Mammary epithelial cell (primary cell): ENCODE measurements at regions of chr6 and their contacts with region 1.

Region 1: DNA sequence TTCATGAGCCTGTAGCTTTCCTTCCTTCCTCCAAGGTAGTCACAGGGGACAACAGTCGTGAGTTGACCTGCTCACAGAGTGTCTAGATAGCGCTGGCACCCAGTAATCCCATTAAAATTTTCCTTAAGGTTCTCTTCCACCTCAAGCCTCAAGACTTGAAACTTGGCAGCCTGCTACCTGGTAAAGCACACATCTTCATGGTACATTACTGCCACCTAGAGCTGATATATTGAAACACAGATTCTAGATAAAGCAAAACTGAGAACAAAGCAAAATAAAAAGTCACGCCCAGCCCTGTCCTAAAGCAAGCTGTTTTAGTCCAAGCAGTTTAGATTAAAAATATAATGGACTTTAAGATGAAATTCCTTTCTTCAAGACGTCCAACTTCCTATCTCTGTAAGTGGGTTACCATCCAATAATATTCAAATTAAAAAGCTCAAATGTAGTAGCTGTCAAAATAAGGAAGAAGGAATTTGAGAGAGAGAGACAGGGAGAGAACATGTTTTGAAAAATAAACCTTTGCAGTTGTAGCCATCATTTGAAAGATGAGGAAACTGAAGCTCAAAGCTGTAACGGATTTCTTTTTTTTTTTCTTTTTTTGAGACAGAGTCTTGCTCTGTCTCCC is 50.7 kb upstream of the CD83 start:
- DNase-seq: peak; percentile 68
- H3K4me3 ChIP-seq: no peak overlapping the region
- H3K27ac ChIP-seq: no peak overlapping the region
- H3K4me1 ChIP-seq: peaks cover 15% of the 10 kb centered on the region
- H3K27me3 ChIP-seq: no peaks in the 10 kb centered on the region
- CTCF ChIP-seq: peak; percentile 48 to 62

Region 2: DNA sequence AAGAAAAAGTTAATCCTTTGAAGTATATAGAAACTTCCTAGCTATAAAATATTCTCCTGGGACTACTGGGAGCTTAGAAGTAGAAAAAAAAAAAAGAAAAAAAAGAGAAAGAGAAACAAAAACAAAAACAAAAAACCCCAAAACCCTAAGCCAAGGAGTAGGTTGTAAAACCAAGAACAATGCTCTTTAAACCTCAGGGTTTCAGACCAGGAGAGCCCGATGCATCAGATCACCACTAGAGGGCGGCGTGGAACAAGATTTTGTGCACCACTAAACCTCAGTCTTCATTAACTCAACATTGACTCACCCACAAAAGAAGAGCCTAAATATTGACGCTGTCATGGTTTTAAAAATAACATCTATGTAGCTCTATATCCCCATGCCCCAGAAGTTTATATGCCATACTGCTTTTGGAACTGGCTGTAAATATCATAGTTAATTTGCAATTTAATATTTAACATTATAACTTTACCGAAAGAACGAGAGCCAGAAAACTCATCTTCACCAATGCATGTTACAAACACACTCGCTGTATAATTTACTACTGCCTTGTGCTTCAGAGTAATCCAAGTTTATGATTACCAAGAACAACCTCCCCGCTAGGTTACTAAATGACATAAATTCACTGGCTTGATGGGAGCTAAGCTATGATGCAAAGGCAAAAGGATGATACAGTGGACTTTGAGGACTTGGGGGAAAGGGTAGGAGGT is 271.7 kb before region 1 on chr6:
- CTCF ChIA-PET with region 1: interaction called, 6 read pairs
- dilution Hi-C with region 1: no loop called
- in situ Hi-C with region 1: no loop called
- intact Hi-C with region 1: loop called (anchors 1 kb)
- DNase-seq: peak; percentile 73
- H3K4me3 ChIP-seq: no peak overlapping the region
- H3K27ac ChIP-seq: peak overlapping the region; percentile 53
- H3K4me1 ChIP-seq: peaks cover 5% of the 10 kb centered on the region
- H3K27me3 ChIP-seq: no peaks in the 10 kb centered on the region
- CTCF ChIP-seq: peak; percentile 94 to 97

Region 3: DNA sequence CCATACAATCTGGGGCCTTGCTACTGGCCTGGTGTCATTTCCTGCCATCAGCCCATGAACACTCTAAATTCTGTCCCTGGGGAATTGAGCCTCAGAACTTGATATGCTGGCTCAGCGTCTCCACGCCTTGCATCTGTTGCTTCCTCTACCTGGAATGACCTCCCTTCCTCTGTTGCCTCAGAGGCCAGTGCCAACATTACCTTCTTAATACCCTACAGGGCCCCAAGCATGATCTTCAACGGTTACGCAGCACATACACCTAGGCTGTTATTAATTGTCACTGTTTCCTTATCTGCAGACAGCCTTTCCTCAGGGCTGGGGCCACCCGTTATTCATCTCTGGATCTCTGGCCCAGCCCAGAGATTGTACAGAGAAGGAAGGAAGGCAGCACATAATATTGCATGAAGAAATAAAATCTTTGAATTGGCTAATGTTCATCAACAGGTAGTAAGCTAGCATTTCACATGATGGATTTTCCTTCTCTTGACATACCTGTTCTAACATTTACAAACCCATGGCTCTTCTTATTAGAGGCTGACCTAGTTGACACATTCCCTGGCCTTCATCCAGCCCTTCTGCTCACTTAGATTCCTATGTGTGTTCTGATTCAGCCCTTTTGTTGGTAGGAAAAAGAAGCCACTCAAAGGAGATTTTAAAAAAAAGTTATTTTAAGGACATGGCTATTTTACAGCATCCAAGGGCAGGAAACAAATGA is 150.5 kb before region 1 on chr6:
- CTCF ChIA-PET with region 1: interaction called, 9 read pairs
- dilution Hi-C with region 1: no loop called
- in situ Hi-C with region 1: loop called in 1 of 2 experiments (anchors 5 kb)
- intact Hi-C with region 1: loop called (anchors 1 kb)
- DNase-seq: peak; percentile 39
- H3K4me3 ChIP-seq: no peak overlapping the region
- H3K27ac ChIP-seq: no peak overlapping the region
- H3K4me1 ChIP-seq: peaks cover 20% of the 10 kb centered on the region
- H3K27me3 ChIP-seq: no peaks in the 10 kb centered on the region
- CTCF ChIP-seq: no peak

Region 4: DNA sequence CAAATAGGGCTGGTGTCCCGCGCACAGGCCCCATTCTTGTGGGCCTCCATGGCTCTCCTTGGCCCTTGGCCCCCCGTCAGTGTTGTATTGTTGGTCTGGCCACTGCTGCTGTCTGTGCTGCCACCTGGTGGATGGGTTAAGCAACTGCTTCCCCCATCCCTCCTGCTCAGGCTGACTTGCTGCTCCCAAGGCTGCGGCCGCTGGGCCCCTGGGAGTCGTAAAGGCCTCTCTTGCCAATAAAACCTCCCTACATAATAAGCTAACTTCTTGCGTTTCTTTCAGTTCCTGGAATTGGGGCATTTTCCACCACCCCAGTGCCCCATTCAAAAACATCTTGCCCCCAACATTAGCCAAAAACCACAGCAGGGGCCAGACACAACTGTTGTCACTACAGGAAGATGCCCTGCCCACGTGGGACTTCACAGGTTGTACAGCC is 77.8 kb after region 1 on chr6:
- CTCF ChIA-PET with region 1: no interaction called
- dilution Hi-C with region 1: no loop called
- in situ Hi-C with region 1: no loop called
- intact Hi-C with region 1: loop called (anchors 1 kb)
- DNase-seq: peak; percentile 30
- H3K4me3 ChIP-seq: no peak overlapping the region
- H3K27ac ChIP-seq: no peak overlapping the region
- H3K4me1 ChIP-seq: no peaks in the 10 kb centered on the region
- H3K27me3 ChIP-seq: no peaks in the 10 kb centered on the region
- CTCF ChIP-seq: peak; percentile 92 to 99